Activated B cell treated with CpG ODN at 0.5 μM for 24 hours (primary cell): ENCODE measurements at regions of chr9 and their contacts with region 1.

Region 1: GRCh38 chr9:122904823-122905710 is at the start of gene RC3H2:
- DNase-seq: peak; percentile 86
- ATAC-seq: peak; percentile 89
- H3K4me3 Mint-ChIP-seq: peak within 1 kb of the TSS; percentile 92
- H3K27ac Mint-ChIP-seq: peak within 1 kb of the TSS; percentile 94
- H3K4me1 Mint-ChIP-seq: peaks cover 34% of the 10 kb centered on the region
- H3K27me3 Mint-ChIP-seq: no peaks in the 10 kb centered on the region
- CTCF ChIP-seq: no peak
- total RNA-seq, gene RC3H2: 50.8 and 62.7 TPM in 2 replicates

Region 2: DNA sequence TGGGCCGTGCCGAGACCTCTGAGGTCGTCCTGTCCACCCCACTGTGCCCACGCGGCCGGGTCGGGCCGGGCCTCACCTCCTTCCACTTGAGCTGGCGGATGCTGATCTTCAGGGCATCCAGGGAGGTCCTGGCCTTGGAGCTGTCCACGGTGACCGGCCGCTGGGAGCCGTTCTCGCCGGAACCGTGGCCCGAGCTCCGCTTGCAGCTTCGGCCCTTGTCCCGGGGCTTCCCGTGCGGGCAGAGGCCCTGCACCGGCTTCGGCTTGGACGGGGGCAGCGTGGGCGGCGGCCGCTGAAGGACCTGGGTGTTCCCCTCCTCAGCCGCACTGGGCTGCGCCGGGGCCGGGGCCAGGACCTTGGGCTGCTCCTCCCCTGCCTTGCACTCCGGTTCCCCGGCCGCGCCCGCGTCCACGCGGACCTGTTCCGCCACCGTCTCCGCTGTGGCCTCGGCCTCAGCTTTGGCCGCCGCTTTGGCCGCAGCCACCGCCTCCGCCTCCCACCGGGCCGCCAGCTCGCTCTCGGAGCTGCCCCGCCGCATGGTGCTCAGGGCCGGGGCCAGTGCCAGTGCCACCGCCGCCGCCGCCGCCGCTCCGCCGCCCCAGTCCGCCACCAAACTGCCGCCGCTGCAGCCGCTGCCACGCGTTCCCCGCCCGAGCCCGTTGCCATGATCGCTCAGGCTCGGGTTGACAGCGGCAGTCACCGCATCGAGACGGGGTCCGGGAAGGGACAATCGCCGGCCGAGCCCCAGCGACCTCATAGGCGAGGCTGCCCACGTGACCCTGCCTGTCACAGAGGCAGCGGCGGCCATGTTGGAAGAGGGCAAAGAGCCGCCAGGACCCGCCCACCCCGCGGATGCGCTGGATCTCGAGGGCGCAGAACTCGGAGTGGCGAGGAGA is 812.2 kb before region 1 on chr9 and contains the start of gene TTLL11:
- CTCF ChIA-PET with region 1: no interaction called
- POLR2A ChIA-PET with region 1: no interaction called
- intact Hi-C with region 1: loop called (anchors 5 kb)
- DNase-seq: peak; percentile 92
- ATAC-seq: peak; percentile 96
- H3K4me3 Mint-ChIP-seq: peak within 1 kb of the TSS; percentile 85
- H3K27ac Mint-ChIP-seq: peak within 1 kb of the TSS; percentile 3
- H3K4me1 Mint-ChIP-seq: peaks cover 42% of the 10 kb centered on the region
- H3K27me3 Mint-ChIP-seq: peaks cover 9% of the 10 kb centered on the region
- CTCF ChIP-seq: no peak
- total RNA-seq, gene TTLL11: 3.6 and 4.7 TPM in 2 replicates

Region 3: DNA sequence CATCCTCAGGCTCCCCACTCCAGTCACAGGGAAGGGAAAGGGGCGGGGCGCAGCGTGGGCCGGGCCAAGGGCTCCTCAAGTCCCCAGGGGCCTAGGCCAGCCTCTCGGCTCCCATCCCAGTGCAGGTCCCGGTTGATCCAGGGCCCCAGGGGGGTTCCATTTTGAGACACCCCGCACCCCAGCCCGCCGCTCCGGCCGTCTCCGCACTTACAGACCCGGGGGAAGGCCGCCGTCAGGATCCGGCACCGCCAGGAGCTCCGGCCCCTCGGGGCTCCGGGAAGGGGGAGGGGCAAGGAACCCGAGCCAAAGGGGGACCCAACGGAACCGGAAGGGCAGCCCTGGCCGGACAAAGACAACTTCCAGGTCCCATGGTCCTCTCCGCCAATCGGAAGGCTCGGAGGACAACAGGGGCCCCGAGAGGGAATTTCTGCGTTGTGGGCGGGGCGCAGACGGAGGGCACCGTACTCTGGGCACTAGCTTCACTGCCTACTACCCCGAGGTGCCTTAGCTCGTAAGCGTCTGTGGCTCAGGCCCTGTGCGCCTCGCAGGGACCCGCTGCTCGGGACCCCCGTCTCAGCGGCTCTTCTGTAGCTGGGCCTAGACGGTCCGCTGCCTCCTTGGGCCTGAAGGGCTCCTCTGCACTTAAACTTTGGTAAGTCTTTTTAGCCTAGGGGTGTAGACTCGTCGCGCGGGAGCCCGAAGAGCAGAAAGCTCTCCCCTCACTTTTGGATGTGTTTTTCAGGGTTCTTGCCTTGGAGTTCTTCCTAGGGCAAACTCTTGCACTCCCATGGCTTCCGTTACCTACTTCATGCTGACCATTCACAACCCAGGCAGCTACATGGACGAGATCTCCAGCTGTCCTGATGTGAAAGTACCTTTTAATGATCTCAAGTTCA is 26.4 kb after region 1 on chr9 and contains the start of gene ZBTB26:
- CTCF ChIA-PET with region 1: interaction called, 3 read pairs
- POLR2A ChIA-PET with region 1: interaction called, 30 read pairs
- intact Hi-C with region 1: loop called (anchors 1 kb)
- DNase-seq: peak; percentile 80
- ATAC-seq: peak; percentile 98
- H3K4me3 Mint-ChIP-seq: no peak within 1 kb of the TSS
- H3K27ac Mint-ChIP-seq: peak within 1 kb of the TSS; percentile 90
- H3K4me1 Mint-ChIP-seq: peaks cover 22% of the 10 kb centered on the region
- H3K27me3 Mint-ChIP-seq: no peaks in the 10 kb centered on the region
- CTCF ChIP-seq: no peak
- total RNA-seq, gene ZBTB26: 9.7 and 11.9 TPM in 2 replicates

Region 4: DNA sequence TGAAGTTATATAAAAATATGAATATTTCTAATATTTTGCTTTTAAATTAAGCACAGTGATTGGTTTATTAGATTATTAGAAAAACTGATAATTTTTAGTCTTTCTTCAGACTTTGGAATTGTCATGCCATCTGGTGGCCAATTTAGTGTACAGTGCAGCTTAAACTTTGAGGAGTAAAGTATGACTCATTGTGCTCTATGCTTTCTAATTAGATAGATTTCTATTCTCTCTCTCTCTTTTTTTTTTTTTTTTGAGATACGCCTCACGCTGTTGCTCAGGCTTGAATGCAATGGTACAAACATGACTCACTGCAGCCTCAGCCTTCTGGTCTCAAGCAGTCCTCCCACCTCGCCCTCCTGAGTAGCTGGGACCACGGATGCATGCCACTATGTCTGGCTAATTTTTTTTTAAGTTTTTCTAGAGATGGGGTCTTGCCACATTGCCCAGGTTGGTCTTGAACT is 86.3 kb after region 1 on chr9:
- CTCF ChIA-PET with region 1: interaction called, 5 read pairs
- POLR2A ChIA-PET with region 1: interaction called, 15 read pairs
- intact Hi-C with region 1: loop called (anchors 2 kb)
- DNase-seq: no peak
- ATAC-seq: peak; percentile 95
- H3K4me3 Mint-ChIP-seq: no peak overlapping the region
- H3K27ac Mint-ChIP-seq: no peak overlapping the region
- H3K4me1 Mint-ChIP-seq: peaks cover 4% of the 10 kb centered on the region
- H3K27me3 Mint-ChIP-seq: no peaks in the 10 kb centered on the region
- CTCF ChIP-seq: no peak

Region 5: DNA sequence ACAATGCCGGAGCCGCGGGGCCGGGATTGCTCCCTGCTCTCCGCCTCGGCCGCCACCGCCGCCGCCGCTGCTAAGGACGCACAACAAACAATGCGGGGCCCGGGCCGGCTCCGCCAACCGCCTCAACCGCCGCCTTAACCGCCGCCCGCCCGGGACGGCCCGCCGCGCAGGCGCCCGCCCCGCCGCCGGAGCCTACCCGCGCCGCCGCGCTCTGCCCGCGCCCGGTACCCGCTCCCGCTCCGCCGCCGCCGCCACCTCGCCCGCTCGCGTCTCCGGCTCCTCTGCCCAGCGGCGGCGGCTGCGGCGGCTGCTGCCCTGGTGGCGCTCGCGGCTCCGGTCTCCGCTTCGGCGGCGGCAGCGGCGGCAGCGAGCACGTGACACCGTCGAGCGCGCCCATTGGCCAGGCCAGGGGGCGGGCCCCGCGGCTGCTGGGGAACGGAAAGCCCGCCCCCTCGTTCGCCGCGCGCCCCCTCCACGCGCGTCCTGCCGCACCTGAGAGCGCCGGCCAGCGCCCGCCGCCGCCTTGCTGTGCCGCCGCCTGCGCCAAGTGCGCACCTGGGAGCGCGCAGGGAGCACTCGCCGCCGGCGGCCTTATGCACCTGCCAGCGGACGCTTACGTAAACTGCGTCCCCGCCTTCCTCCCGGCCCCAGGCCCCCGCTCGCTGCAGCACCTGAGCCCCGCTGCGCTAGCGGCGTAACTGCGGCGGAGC is 363.3 kb after region 1 on chr9 and contains the start of gene STRBP:
- CTCF ChIA-PET with region 1: no interaction called
- POLR2A ChIA-PET with region 1: no interaction called
- intact Hi-C with region 1: loop called (anchors 1 kb)
- DNase-seq: peak; percentile 96
- ATAC-seq: peak; percentile 91
- H3K4me3 Mint-ChIP-seq: peak within 1 kb of the TSS; percentile 83
- H3K27ac Mint-ChIP-seq: peak within 1 kb of the TSS; percentile 78
- H3K4me1 Mint-ChIP-seq: peaks cover 50% of the 10 kb centered on the region
- H3K27me3 Mint-ChIP-seq: no peaks in the 10 kb centered on the region
- CTCF ChIP-seq: no peak
- total RNA-seq, gene STRBP: 124 and 127 TPM in 2 replicates